OCI-LY7 (cell line): ENCODE measurements at regions of chr19 and their contacts with region 1.

Region 1: GRCh38 chr19:45927565-45928261 is 13.1 kb upstream of the NANOS2 start:
- DNase-seq: peak; percentile 98
- H3K4me3 ChIP-seq: peak overlapping the region; percentile 67
- H3K27ac ChIP-seq: peak overlapping the region; percentile 51
- H3K4me1 ChIP-seq: peaks cover 6% of the 10 kb centered on the region
- CTCF ChIP-seq: peak; percentile 44; the same call in 1 of the 2 replicates

Region 2: DNA sequence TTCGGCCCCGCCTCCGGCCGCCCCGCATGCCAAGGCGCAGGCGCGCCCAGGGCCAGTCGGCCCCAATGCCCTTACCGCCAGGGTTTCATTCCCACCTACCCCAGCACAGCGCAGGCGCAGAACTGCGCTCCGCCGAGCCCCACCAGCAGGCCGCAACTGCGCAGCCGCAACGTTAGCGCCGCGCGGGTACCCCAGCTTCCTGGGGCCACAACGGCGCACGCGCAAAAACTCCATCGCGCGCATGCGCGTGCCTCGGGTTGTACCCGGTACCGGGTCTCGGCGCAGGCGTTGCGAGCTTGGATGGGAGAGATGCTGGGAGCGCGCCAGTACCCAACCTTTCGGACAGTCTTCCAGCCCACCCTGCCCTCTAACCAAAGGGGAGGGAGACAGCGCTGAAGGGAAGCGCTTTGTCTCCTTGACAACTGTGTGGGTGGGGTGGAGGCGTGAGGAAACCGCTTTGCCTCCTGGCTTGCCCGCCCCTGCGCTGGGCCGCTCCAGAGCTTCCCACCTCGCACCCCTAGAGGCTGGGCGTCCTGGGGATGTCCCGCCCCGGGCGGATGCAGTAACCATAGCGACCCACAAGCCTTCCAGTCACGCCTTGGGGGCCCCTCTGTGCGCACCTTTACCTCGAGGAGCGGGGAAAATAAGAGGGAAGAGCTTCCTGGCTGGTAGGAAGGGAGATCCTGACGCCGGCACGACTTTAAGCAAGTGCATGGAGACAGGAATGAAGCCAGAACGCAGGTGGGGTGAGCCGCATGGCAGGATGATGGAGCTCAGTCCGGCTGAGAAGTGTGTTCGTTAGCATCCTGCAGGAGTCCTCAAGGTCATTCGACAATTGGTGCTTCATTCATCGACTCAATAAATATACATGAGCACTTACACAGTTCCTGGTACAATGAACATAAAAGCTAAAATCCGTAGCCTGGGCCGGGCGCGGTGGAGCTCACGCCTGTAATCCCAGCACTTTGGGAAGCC is 24.8 kb before region 1 on chr19:
- CTCF ChIA-PET with region 1: no interaction called
- POLR2A ChIA-PET with region 1: no interaction called
- intact Hi-C with region 1: loop called (anchors 2 kb)
- DNase-seq: peak; percentile 98
- H3K4me3 ChIP-seq: peak overlapping the region; percentile 94
- H3K27ac ChIP-seq: peak overlapping the region; percentile 73
- H3K4me1 ChIP-seq: peaks cover 20% of the 10 kb centered on the region
- CTCF ChIP-seq: no peak

Region 3: DNA sequence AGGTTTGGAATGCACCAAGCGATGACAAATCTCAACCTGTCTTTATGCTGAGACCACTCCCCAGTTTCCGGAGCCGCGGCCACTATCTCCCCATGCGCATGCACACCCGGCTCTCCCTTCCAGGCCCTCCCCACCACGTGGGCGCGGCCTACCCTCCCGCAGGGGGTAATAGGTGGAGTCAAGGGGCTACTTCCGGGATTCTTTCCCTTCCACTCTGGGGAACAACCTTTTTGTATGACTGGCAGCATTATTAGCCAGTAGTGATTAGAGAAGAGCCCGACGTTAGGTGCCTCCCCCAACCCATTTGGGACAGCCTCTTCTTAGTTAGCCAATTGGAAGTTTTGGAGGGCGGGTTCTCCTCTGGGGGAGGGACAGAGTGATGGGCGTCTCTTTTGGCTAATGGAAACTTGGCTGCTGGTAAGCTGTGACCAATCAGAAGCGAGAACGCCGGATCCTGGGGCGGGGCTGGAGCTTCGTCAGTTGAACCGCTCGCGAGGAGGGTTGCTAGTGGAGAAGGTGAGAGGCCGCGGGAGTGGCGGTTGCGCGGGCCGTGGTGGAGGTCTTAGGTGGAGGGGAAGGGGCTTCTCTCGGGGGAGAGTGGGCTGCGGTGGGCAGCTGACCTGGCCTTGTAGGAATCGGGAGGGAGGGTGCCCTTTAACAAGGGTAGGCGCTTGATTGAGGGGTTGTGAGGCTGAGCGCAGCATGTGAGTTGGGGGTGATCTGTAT is 67.4 kb after region 1 on chr19 and contains the start of gene CCDC61:
- CTCF ChIA-PET with region 1: no interaction called
- POLR2A ChIA-PET with region 1: no interaction called
- intact Hi-C with region 1: loop called (anchors 5 kb)
- DNase-seq: peak; percentile 100
- H3K4me3 ChIP-seq: peak within 1 kb of the TSS; percentile 82
- H3K27ac ChIP-seq: peak within 1 kb of the TSS; percentile 24
- H3K4me1 ChIP-seq: peaks cover 12% of the 10 kb centered on the region
- CTCF ChIP-seq: no peak
- total RNA-seq, gene CCDC61: 14.2 and 15.3 TPM in 2 replicates